Panc1 (cell line): ENCODE measurements at regions of chr16 and their contacts with region 1.

Region 1: GRCh38 chr16:75452464-75453190 is 11.9 kb downstream of the TMEM170A start:
- DNase-seq: no peak
- ATAC-seq: no peak
- H3K4me3 ChIP-seq: no peak overlapping the region
- H3K27ac ChIP-seq: no peak overlapping the region
- H3K4me1 ChIP-seq: no peaks in the 10 kb centered on the region; the same call in 1 of the 2 replicates
- H3K27me3 ChIP-seq: no peaks in the 10 kb centered on the region
- CTCF ChIP-seq: no peak

Region 2: DNA sequence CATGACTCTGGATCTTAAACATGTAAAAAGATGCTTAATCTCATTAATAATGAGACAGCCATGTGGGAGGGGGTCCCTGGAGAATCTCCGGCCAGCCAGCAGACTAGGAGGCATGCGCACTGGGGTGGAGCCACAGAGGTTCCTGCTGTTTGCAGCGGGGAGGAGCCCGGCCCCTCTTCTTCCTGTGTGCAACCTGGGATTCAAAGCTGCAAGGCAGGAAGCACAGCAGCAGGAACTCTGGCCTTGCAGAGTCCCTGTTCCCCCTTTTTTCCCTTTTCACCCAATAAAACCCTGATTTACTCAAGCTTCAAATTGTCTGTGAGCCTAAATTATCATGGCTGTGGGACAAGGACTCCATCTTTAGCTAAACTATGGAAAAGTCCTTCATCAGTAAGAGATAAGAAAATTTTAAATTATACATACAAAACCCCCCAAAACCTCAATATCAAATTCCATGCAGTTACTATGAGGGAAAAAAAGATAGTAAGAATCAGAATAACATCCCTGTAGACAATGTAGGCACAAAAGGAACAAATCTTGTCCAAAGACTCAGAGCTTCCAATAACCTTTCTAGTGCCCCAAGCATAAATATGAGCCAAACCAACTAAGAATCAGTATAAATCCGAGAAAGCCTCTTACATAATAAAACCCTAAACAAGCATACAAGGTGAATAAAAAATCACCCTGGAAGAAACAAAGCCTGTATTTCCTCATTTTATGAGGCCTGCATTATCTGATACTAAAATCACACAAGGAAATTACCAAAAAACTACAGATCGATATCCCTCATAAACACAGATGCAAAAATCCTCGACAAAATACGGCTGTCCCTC is 31.4 kb before region 1 on chr16:
- CTCF ChIA-PET with region 1: no interaction called
- POLR2A ChIA-PET with region 1: interaction called, 11 read pairs
- in situ Hi-C with region 1: no loop called
- intact Hi-C with region 1: no loop called
- DNase-seq: no peak
- ATAC-seq: peak; percentile 97
- H3K4me3 ChIP-seq: peak overlapping the region; percentile 5 to 29; a peak in 2 of 4 replicates
- H3K27ac ChIP-seq: peak overlapping the region; percentile 74; the same call in 1 of the 2 replicates
- H3K4me1 ChIP-seq: peaks cover 11% of the 10 kb centered on the region
- H3K27me3 ChIP-seq: no peaks in the 10 kb centered on the region
- CTCF ChIP-seq: no peak

Region 3: GRCh38 chr16:75527825-75528299 is 75.2 kb after region 1 on chr16:
- CTCF ChIA-PET with region 1: no interaction called
- POLR2A ChIA-PET with region 1: no interaction called
- in situ Hi-C with region 1: no loop called
- intact Hi-C with region 1: no loop called
- DNase-seq: no peak
- ATAC-seq: no peak
- H3K4me3 ChIP-seq: no peak overlapping the region
- H3K27ac ChIP-seq: no peak overlapping the region
- H3K4me1 ChIP-seq: no peaks in the 10 kb centered on the region
- H3K27me3 ChIP-seq: no peaks in the 10 kb centered on the region
- CTCF ChIP-seq: no peak

Region 4: DNA sequence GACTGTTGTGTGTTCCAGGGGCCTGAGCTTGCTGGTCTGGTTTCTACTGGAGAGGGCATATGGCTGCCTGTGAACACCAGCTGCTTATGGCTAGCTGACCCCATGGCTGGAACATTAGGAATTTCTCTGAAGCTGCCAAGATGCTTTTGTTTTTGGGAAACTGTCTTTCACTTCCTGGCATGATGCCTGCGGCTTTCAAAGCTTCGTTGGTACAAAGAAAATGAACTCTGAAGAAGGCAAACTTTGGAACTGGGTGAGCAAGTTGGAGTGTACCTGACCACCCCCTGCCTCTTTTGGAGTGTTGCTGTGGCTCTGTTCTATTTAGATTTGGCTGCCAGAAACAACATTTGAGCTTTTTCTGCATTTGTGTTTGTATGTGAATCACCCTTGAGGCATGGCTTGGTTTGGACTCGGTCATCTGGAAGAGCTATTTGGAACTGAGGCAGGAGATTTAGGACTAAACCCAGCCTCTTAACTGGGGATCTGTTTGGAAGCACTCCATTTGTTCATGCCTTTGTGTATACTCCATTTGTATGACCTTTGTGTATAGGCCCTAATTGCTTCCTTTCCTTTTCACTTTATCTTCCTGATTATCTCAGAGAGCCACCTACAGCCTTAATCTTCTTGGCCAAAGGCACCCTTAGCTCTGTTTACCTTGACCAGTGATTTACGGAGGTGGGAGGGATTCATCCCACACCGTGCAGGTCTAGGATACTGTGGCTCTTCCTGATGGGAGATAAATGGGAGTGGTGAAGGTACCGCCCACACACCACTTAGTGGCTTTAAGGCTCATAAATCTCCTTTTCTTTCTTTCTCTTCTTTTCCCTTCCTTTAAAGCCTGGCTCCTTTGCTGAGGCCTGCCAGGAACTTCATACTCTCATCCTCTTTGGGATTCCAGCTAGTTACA is 280.9 kb after region 1 on chr16:
- CTCF ChIA-PET with region 1: no interaction called
- POLR2A ChIA-PET with region 1: no interaction called
- in situ Hi-C with region 1: no loop called
- intact Hi-C with region 1: no loop called
- DNase-seq: no peak
- ATAC-seq: no peak
- H3K4me3 ChIP-seq: no peak overlapping the region
- H3K27ac ChIP-seq: no peak overlapping the region
- H3K4me1 ChIP-seq: no peaks in the 10 kb centered on the region
- H3K27me3 ChIP-seq: no peaks in the 10 kb centered on the region
- CTCF ChIP-seq: no peak

Region 5: GRCh38 chr16:75908331-75909117 is 455.9 kb after region 1 on chr16:
- CTCF ChIA-PET with region 1: no interaction called
- POLR2A ChIA-PET with region 1: no interaction called
- in situ Hi-C with region 1: no loop called
- intact Hi-C with region 1: no loop called
- DNase-seq: no peak
- ATAC-seq: no peak
- H3K4me3 ChIP-seq: no peak overlapping the region
- H3K27ac ChIP-seq: no peak overlapping the region
- H3K4me1 ChIP-seq: no peaks in the 10 kb centered on the region
- H3K27me3 ChIP-seq: no peaks in the 10 kb centered on the region
- CTCF ChIP-seq: no peak